Endothelial cell of umbilical vein (primary cell): ENCODE measurements at regions of chr10 and their contacts with region 1.

Region 1: DNA sequence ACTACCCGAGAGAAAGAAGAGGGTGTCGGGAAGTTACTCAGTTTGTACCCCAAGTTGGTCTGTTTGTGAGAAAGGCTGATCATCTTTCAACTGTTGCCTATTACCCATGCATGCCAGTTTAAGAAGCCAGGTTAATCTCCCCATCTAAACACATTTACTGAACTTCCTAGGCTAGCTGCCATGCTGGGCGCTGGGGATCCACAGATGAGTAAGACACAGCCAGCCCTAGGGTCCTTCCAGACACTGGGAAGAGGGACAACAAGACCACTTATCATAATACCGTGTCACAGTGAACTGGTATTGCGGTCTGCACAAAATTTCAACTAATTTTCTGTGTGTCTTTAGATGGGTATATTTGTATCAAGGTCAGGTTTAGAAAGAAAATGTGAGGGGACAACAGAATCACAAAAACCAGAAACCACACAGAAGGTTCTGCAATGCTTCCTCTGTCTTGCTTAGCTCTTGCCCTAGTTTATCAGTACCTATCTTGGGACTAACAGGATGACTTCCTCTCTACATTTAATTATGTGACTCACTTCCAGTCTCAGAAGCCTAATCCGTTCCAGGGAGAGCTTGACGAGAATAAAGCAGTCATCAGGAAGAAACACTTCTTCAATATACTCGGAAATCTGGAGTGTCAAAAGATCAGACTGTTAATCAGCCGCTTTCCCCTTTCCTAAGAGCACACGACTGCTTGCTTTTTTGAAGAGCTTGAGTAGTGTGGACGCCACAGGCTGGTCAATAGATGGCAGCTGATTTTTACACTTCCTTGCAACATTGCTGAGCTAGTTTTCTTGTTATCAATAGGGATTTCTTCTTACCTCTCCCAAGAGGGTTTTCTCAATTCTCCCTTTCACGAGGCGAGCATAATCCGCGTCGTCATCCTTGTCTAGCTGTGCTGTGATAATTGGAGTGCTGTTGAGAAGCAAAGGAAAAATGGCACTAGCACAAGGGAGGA is 45.7 kb downstream of the POLR3A start:
- DNase-seq: peak; percentile 89
- H3K4me3 ChIP-seq: no peak overlapping the region
- H3K27ac ChIP-seq: no peak overlapping the region
- H3K4me1 ChIP-seq: peaks cover 24% of the 10 kb centered on the region
- H3K27me3 ChIP-seq: no peaks in the 10 kb centered on the region
- CTCF ChIP-seq: no peak
- POLR2A ChIP-seq: no peak

Region 2: GRCh38 chr10:77926566-77927401 is 56.9 kb before region 1 on chr10 and contains the start of gene DLG5:
- CTCF ChIA-PET with region 1: interaction called, 8 read pairs
- POLR2A ChIA-PET with region 1: no interaction called
- dilution Hi-C with region 1: no loop called
- intact Hi-C with region 1: loop called (anchors 2 kb)
- DNase-seq: peak; percentile 26
- H3K4me3 ChIP-seq: peak within 1 kb of the TSS; percentile 47 to 75 (median 53)
- H3K27ac ChIP-seq: no peak within 1 kb of the TSS
- H3K4me1 ChIP-seq: peaks cover 14% of the 10 kb centered on the region
- H3K27me3 ChIP-seq: peaks cover 21 to 26% of the 10 kb centered on the region in 2 experiments
- CTCF ChIP-seq: no peak
- POLR2A ChIP-seq: peak; percentile 40
- total RNA-seq, gene DLG5: 23.1 and 24.9 TPM in 2 replicates

Region 3: GRCh38 chr10:77949167-77949566 is 34.5 kb before region 1 on chr10:
- CTCF ChIA-PET with region 1: no interaction called
- POLR2A ChIA-PET with region 1: no interaction called
- dilution Hi-C with region 1: no loop called
- intact Hi-C with region 1: no loop called
- DNase-seq: peak; percentile 18
- H3K4me3 ChIP-seq: no peak overlapping the region
- H3K27ac ChIP-seq: no peak overlapping the region
- H3K4me1 ChIP-seq: peaks cover 10% of the 10 kb centered on the region
- H3K27me3 ChIP-seq: no peaks in the 10 kb centered on the region
- CTCF ChIP-seq: no peak
- POLR2A ChIP-seq: no peak

Region 4: DNA sequence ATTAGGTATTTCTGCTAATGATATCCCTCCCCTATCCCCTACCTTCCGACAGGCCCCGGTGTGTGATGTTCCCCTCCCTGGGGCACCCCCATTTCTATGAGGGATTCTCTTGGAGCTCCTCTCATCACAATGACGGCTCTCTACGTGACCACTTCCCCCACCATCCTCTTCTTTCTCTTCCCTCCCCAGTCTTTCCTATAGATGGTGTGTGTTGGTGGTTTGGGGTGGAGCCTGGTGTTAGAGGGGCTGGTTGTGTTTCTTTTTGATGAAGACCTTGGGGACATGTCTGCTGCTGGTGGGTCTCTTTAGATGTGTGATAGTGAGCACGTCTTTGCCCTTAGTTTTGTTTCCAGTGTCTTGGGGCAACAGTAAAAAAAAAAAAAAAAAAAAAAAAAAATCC is 78.6 kb after region 1 on chr10:
- CTCF ChIA-PET with region 1: no interaction called
- POLR2A ChIA-PET with region 1: no interaction called
- dilution Hi-C with region 1: no loop called
- intact Hi-C with region 1: no loop called
- DNase-seq: no peak
- H3K4me3 ChIP-seq: no peak overlapping the region
- H3K27ac ChIP-seq: no peak overlapping the region
- H3K4me1 ChIP-seq: no peaks in the 10 kb centered on the region
- H3K27me3 ChIP-seq: no peaks in the 10 kb centered on the region
- CTCF ChIP-seq: no peak
- POLR2A ChIP-seq: no peak

Region 5: GRCh38 chr10:78165617-78166016 is 182.0 kb after region 1 on chr10:
- CTCF ChIA-PET with region 1: no interaction called
- POLR2A ChIA-PET with region 1: no interaction called
- dilution Hi-C with region 1: no loop called
- intact Hi-C with region 1: no loop called
- DNase-seq: no peak
- H3K4me3 ChIP-seq: no peak overlapping the region
- H3K27ac ChIP-seq: no peak overlapping the region
- H3K4me1 ChIP-seq: no peaks in the 10 kb centered on the region
- H3K27me3 ChIP-seq: no peaks in the 10 kb centered on the region
- CTCF ChIP-seq: no peak
- POLR2A ChIP-seq: no peak